ENCODE measurements at regions of chr1 and their contacts with region 1.

Region 1: DNA sequence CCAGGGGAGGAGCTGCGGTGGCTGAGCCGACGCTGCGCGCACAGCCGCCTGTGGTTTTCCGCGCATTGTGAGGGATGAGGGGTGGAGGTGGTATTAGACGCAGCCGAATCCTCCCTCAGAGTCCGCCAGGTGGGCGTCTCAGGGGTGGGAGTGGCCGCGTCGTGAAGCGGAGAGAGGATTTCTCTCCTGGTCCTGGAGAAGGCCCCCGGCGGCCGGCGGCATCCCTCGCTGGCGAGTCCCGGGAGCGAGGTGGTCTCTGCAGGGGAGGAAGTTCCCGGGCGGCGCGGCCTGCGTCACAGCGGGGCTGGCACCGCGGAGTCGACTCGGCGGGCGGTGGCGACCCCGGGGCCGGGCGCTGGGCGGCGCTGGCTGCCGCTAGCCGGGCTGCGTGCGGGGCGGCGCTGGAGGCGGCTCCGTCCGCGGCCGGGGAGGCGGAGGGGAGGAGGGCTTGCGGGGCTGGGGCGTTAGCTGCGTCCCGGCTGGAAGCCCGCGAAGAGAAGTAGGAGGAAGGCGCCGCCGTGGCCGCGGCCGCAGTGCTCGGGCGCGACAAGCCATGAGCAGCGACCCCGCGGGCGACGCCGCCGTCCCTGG is at the start of gene LRRC8C:
- DNase-seq: peak; percentile 84
- H3K4me3 ChIP-seq: peak within 1 kb of the TSS; percentile 60 to 85 (median 82)
- H3K27ac ChIP-seq: peak within 1 kb of the TSS; percentile 84 to 87 (median 84)
- H3K4me1 ChIP-seq: peaks cover 0 to 17% (median 14%) of the 10 kb centered on the region in 4 donors
- H3K27me3 ChIP-seq: peaks cover 7% of the 10 kb centered on the region
- CTCF ChIP-seq: peak in 2 of 5 experiments; percentile 18 to 26
- EP300 ChIP-seq: no peak
- POLR2A ChIP-seq: peak; percentile 17
- total RNA-seq, gene LRRC8C: 2.4 to 4.4 (median 2.7) TPM

Region 2: DNA sequence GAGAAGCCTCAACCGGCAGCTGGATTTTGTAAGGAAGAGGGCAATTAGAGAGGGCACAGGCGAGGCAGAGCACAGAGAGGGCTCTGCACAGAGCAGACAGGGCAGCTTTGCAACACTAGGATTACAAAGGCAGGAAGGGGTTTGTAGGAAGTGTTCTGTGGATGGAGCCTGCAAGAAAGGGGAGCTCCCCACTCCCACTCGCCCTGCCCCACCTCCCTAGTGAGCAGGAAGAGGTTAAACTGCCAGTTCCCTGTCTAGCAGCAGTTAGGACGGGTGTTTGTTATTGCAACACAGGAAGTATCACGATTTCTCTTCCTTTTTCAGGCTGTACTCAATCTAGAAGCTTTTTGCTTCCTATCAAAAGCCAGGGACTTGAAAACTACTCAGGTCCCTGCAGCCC is 124.8 kb after region 1 on chr1:
- in situ Hi-C with region 1: loop called (anchors 10 to 25 kb)
- intact Hi-C with region 1: loop called (anchors 5 kb)
- DNase-seq: no peak
- H3K4me3 ChIP-seq: no peak overlapping the region
- H3K27ac ChIP-seq: peak overlapping the region; percentile 39 to 45 (median 42)
- H3K4me1 ChIP-seq: peaks cover 0 to 19% (median 5%) of the 10 kb centered on the region in 4 donors
- H3K27me3 ChIP-seq: no peaks in the 10 kb centered on the region
- CTCF ChIP-seq: no peak
- EP300 ChIP-seq: no peak
- POLR2A ChIP-seq: no peak

Region 3: GRCh38 chr1:89980605-89981004 is 347.9 kb after region 1 on chr1:
- in situ Hi-C with region 1: loop called in 1 of 4 experiments (anchors 25 kb)
- intact Hi-C with region 1: loop called (anchors 5 kb)
- DNase-seq: no peak
- H3K4me3 ChIP-seq: no peak overlapping the region
- H3K27ac ChIP-seq: no peak overlapping the region
- H3K4me1 ChIP-seq: no peaks in the 10 kb centered on the region
- H3K27me3 ChIP-seq: no peaks in the 10 kb centered on the region
- CTCF ChIP-seq: no peak
- EP300 ChIP-seq: no peak
- POLR2A ChIP-seq: no peak

Measured in transverse colon (tissue), 4 donors.